ENCODE measurements at regions of chr4 and their contacts with region 1.

Region 1: GRCh38 chr4:8241895-8242696 is 27.5 kb upstream of the HTRA3 start:
- DNase-seq: peak; percentile 94
- H3K4me3 Mint-ChIP-seq: no peak overlapping the region
- H3K27ac Mint-ChIP-seq: no peak overlapping the region
- H3K4me1 Mint-ChIP-seq: no peaks in the 10 kb centered on the region
- H3K27me3 Mint-ChIP-seq: no peaks in the 10 kb centered on the region

Region 2: GRCh38 chr4:7988437-7988836 is 253.7 kb before region 1 on chr4:
- intact Hi-C with region 1: no loop called
- DNase-seq: no peak
- H3K4me3 Mint-ChIP-seq: no peak overlapping the region
- H3K27ac Mint-ChIP-seq: no peak overlapping the region
- H3K4me1 Mint-ChIP-seq: peaks cover 4% of the 10 kb centered on the region
- H3K27me3 Mint-ChIP-seq: peaks cover 1% of the 10 kb centered on the region

Region 3: DNA sequence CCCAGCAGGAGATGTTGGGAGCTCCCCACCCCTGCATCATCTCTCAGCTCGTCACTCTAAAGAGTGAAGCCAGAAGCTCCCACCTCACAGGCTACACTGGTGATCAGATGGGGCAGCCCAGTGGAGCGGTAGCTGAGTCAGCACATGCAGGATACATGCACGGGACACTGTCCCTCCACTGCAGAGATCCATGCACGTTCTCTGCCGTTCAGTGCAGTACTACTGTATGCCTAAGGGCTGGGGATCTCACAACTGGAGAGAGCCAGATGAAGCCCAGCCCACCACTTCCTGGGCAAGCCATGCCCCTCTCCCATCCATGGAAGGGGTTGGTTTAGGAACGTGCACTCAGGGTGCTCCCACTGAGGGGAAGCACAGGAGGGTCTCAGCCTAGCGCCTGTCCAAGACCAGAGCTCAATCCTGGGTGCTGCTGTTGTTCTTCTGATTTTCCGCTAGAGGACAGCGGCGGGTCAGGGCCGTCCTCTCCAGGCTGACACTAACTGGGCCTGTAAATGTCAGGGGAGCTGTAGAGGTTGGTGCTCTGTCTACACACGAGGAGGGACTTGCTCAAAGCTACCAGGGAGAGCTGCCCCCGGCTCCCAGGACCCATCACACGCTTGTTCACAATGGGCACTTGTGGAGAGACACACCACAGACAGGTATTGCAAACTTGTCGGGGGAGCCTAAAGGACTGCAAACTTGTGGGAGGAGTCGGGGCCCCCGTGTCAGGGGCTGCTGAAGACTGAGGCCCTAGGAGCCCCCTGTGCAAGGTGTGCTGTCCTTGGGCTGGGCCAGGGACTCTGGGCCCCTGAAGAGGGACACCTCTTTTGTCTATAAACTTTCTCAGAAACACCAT is 65.3 kb before region 1 on chr4:
- intact Hi-C with region 1: loop called (anchors 1 kb)
- DNase-seq: peak; percentile 81
- H3K4me3 Mint-ChIP-seq: no peak overlapping the region
- H3K27ac Mint-ChIP-seq: no peak overlapping the region
- H3K4me1 Mint-ChIP-seq: no peaks in the 10 kb centered on the region
- H3K27me3 Mint-ChIP-seq: no peaks in the 10 kb centered on the region

Region 4: DNA sequence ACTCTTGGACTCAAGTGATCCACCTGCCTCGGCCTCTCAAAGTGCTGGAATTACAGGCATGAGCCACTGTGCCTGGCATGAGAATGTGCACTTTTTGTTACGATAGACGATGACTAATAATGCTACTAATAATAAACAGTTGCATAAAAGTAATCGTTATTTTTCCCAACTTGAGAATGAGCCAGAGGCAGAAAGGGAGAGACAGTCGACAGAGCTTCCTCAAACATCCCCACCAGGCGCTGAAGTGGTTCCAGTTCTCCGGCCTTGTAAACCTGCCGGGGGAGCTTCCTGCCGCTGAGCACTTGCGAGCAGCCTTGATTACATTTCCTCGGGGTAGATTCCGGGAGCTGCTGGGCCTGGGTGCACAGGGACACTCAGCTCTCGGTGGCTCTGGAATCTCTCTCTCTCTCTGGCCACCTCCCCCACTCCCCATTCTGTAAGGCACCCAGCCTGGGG is 18.6 kb after region 1 on chr4:
- intact Hi-C with region 1: no loop called
- DNase-seq: no peak
- H3K4me3 Mint-ChIP-seq: no peak overlapping the region
- H3K27ac Mint-ChIP-seq: no peak overlapping the region
- H3K4me1 Mint-ChIP-seq: no peaks in the 10 kb centered on the region
- H3K27me3 Mint-ChIP-seq: no peaks in the 10 kb centered on the region

Region 5: DNA sequence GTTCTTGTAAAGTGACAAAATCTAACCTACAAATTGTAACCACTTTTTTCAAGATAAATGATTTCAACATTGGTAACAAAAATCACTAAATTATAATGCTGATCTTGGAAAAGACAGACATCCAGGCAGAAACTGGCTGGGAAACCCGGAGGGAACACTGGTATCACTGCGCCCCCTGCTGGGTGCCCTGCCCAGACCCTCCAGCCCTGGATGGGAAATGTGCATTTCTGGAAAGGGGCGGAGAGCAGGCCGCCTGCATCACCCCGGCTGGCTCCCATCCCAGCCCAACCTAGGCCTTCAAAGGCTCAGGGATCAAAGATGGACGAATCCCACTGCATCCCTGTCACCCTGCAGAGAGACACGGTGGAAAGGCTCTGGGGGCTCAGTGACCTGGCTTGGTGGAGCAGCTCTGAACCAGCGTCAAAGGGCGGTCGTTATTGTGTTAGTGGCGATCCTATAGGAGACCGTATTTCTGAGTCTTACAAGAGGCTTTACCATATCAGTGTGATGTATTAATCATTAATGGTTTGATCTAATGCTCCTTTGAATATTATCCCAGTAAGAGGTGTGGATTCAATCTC is 161.2 kb after region 1 on chr4:
- intact Hi-C with region 1: loop called (anchors 1 kb)
- DNase-seq: peak; percentile 82
- H3K4me3 Mint-ChIP-seq: no peak overlapping the region
- H3K27ac Mint-ChIP-seq: no peak overlapping the region
- H3K4me1 Mint-ChIP-seq: no peaks in the 10 kb centered on the region
- H3K27me3 Mint-ChIP-seq: no peaks in the 10 kb centered on the region

Region 6: DNA sequence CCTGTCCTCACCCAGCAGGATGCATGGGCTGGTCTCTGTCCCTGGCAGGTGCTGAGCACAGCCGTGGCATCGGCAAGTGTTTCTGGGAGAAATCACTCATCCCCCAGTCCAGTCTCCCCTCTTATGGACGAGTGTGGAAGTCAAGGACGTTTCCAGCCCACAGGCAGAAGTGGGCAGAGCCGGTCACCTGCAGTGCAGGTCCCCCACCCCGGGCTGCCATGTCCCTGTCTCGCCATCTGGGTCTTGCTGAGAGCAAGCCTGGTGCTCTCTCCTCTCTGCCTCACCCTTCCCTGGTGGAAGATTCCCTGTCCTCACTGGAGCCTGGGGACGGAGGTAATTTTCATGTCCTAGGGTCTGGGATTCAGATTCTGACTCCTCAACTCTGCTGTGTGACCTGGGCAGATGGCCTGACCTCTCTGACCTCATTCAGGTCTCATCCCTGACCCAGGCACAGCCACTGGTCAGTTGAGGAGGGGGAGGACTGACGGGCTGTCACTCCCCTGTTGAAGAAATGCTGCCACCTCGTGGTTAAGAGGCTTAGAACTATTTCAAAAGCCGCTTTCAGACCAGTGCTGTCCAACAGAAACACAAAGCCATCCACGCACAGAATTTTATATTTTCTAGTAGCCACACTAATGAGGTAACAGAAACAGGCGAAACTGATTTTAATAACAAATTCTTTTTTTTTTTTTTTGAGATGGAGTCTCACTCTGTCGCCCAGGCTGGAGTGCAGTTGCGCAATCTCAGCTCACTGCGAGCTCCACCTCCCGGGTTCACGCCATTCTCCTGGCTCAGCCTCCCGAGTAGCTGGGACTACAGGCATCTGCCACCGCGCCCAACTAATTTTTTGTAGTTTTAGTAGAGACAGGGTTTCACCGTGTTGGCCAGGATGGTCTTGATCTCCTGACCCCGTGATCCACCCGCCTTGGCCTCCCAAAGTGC is 352.3 kb after region 1 on chr4:
- intact Hi-C with region 1: loop called (anchors 10 kb)
- DNase-seq: peak; percentile 71
- H3K4me3 Mint-ChIP-seq: no peak overlapping the region
- H3K27ac Mint-ChIP-seq: no peak overlapping the region
- H3K4me1 Mint-ChIP-seq: no peaks in the 10 kb centered on the region
- H3K27me3 Mint-ChIP-seq: peaks cover 21% of the 10 kb centered on the region